ENCODE measurements at regions of chr3 and their contacts with region 1.

Region 1: GRCh38 chr3:102673271-102674115 is 238.7 kb downstream of the ZPLD1 start:
- DNase-seq: peak; percentile 78
- ATAC-seq: peak; percentile 67
- H3K4me3 Mint-ChIP-seq: no peak overlapping the region
- H3K27ac Mint-ChIP-seq: no peak overlapping the region
- H3K4me1 Mint-ChIP-seq: no peaks in the 10 kb centered on the region
- H3K27me3 Mint-ChIP-seq: peaks cover 2% of the 10 kb centered on the region
- CTCF ChIP-seq: peak; percentile 81

Region 2: DNA sequence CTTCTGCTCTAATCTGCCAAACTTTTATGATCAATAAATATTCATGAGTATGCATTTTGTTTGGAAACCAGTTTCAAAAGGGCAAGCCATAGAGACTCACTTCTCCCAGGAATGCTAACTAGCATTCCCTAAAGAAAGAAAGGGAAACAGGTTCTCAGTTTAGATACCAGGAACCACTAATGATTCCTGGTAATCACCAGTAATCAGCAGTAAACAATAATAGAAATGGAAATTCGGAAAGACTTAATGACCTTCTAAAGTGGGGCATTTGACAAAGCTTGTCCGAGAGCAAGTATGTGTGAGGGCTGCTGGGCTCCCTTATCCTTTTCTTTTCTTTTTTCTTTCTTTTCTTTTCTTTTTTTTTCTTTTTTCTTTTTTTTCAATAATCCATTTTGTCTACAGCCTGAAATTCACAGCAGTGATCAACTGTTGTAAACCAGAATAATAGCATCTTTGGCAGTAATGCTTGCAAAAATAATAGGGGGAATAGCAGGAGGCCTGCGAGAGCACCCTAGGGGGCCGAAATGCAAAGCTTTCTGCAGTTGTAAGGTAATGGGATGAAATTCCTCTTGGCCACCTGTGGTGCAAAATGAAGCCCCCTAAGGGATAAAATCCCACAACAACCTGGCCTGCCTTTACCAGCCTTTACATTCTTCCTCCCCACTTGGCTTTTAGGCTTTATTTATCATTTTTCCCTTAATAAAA is 14.5 kb after region 1 on chr3:
- CTCF ChIA-PET with region 1: interaction called, 32 read pairs
- POLR2A ChIA-PET with region 1: no interaction called
- intact Hi-C with region 1: no loop called
- DNase-seq: no peak
- ATAC-seq: no peak
- H3K4me3 Mint-ChIP-seq: no peak overlapping the region
- H3K27ac Mint-ChIP-seq: no peak overlapping the region
- H3K4me1 Mint-ChIP-seq: no peaks in the 10 kb centered on the region
- H3K27me3 Mint-ChIP-seq: peaks cover 14% of the 10 kb centered on the region
- CTCF ChIP-seq: no peak

Region 3: DNA sequence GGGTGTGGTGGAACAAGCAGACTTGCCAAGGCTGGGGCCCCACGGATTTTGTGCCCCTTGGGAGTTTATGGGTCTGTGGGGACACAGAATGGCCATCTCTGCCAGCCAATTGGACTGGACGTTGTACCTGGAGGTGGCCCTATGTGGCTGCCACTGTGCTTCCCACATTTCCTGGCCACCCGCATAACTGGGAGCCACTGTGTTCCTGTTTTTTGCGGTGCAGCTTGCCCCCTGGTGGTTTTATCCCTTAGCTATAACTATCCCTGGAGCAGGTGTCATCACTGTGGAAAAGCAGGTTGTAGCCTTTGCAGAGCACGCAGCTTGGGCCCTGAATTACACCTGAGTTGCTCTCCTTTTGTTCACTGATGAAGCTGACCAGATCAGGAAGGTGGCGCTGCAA is 67.6 kb after region 1 on chr3:
- CTCF ChIA-PET with region 1: interaction called, 15 read pairs
- POLR2A ChIA-PET with region 1: no interaction called
- intact Hi-C with region 1: no loop called
- DNase-seq: no peak
- ATAC-seq: no peak
- H3K4me3 Mint-ChIP-seq: no peak overlapping the region
- H3K27ac Mint-ChIP-seq: no peak overlapping the region
- H3K4me1 Mint-ChIP-seq: no peaks in the 10 kb centered on the region
- H3K27me3 Mint-ChIP-seq: no peaks in the 10 kb centered on the region
- CTCF ChIP-seq: no peak